ENCODE measurements at regions of chr5 and their contacts with region 1.

Region 1: DNA sequence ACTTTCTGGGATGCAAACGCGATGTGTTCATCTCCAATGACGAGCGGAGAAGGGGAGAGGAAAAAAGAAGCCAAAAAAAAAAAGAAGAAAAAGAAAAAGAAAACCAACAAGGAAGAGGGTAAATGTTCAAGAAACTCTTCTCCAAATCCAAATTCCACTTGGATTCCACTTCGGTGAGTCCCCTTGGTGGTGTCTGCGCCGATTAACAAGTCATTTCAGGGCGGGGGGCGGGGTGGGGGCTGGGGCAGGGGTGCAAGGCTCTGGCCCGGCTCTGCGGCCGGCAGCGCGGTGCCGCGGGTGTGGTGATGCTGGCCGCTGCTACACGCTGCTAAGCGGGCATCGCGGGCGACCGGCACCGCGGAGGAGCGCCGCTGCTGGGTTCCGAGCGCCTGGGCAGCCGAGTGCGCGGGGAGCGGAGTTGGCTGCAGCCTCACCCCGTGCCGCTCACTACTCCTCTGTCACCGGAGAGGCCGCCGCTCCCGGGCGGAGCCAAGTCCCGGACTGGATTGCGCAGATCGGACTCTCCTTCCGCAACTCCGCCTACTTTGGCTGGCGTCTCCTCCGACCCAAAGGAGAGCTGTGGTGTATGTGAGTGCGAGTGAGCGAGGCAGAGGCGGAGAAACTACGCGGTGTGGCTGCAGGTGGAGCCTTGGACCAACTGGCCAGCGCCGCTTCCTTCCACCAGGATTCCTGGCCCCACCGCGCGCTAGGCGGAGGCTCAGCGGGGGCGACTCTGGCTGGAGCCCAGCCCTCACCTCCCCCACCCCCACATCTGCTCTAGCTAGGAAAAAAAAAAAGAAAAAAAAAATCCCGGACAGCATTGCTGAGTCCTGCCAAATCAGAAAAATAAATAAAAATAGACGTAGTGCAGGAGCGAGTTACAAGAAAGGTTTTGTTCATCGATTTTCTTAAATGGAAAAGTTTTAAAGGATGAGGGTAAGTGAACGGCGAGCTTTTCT is at the start of gene SEMA6A:
- DNase-seq: peak; percentile 97
- H3K4me3 ChIP-seq: peak within 1 kb of the TSS; percentile 79 to 83 (median 82)
- H3K27ac ChIP-seq: peak within 1 kb of the TSS; percentile 80 to 85 (median 82)
- H3K4me1 ChIP-seq: peaks cover 6 to 38% (median 20%) of the 10 kb centered on the region in 4 donors
- H3K27me3 ChIP-seq: no peaks in the 10 kb centered on the region
- CTCF ChIP-seq: peak in 1 of 4 experiments; percentile 29
- EP300 ChIP-seq: peak in 1 of 4 donors; percentile 10
- POLR2A ChIP-seq: peak; percentile 33 to 80
- total RNA-seq, gene SEMA6A: 25.0 to 55.7 (median 39.5) TPM

Region 2: DNA sequence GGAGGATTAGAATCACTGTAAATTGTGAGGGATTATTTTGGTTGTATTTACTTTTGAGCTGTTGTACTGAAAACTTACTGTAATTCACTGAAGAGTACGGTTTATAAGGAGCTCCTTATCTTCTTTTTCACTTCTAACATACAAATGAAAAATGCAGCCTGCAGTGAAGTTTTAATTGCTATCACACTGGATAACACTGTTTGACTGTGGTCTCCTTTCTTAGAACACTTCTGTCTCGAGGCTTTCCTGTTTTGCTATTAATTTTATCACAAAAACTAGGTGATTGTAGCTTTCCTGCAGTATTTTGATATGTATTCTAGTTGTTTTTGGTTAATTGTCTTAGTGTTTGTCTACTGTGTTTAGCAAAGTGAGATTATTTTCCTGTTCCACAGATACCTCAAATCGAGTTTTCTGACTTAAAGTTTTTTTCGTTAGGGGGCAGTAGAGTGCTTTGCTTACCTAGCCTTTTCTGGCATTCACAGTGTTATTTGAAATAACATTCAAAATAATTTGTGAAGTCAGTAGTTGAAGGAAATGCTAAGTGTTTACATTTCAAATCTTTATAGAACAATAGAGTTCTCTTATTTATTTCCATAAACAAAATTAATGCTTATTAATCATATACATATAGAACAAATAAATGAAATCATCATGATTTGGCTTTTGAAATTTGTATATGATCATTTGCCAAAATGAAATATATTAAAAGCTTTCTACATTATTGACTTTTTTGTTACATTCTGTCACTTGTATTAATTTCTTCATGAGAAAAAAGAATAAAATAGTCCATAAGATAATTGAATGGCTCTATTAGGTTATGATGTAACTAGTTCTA is 436.9 kb before region 1 on chr5:
- intact Hi-C with region 1: loop called (anchors 5 kb)
- DNase-seq: no peak
- H3K4me3 ChIP-seq: no peak overlapping the region
- H3K27ac ChIP-seq: no peak overlapping the region
- H3K4me1 ChIP-seq: peaks cover 0 to 2% (median 0%) of the 10 kb centered on the region in 4 donors
- H3K27me3 ChIP-seq: no peaks in the 10 kb centered on the region
- CTCF ChIP-seq: peak; percentile 58 to 78 (median 68)
- EP300 ChIP-seq: no peak
- POLR2A ChIP-seq: no peak

Region 3: GRCh38 chr5:116442095-116442534 is 132.5 kb before region 1 on chr5:
- intact Hi-C with region 1: loop called (anchors 5 kb)
- DNase-seq: no peak
- H3K4me3 ChIP-seq: no peak overlapping the region
- H3K27ac ChIP-seq: no peak overlapping the region
- H3K4me1 ChIP-seq: peaks cover 0 to 20% (median 14%) of the 10 kb centered on the region in 4 donors
- H3K27me3 ChIP-seq: no peaks in the 10 kb centered on the region
- CTCF ChIP-seq: no peak
- EP300 ChIP-seq: no peak
- POLR2A ChIP-seq: no peak

Region 4: DNA sequence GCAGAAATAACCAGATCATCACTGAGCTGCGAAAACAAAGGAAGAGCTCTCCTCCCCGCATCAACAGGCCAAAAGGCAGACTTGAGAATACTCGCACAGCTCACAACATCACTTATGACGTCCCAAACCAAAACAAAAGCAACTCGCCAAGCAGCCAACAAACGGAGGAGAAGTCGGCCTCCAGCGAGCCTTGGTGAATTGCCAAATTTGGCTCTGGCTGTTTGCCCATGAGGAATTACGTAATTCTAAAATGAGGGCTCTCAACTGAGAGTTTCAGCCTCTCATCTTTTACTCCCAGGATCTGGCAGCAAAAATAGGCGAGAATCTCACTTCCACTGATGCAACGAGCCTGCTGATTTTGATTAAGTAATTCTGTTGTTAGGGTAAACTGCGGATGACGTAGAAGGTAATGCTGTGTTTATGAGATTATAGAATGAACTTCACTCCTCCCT is 51.7 kb after region 1 on chr5:
- intact Hi-C with region 1: loop called (anchors 2 kb)
- DNase-seq: peak; percentile 92
- H3K4me3 ChIP-seq: peak overlapping the region in 3 of 4 donors; percentile 14 to 28 (median 28)
- H3K27ac ChIP-seq: peak overlapping the region; percentile 53 to 73 (median 70)
- H3K4me1 ChIP-seq: peaks cover 0 to 18% (median 11%) of the 10 kb centered on the region in 4 donors
- H3K27me3 ChIP-seq: no peaks in the 10 kb centered on the region
- CTCF ChIP-seq: no peak
- EP300 ChIP-seq: peak in 1 of 4 donors; percentile 14
- POLR2A ChIP-seq: no peak

Region 5: DNA sequence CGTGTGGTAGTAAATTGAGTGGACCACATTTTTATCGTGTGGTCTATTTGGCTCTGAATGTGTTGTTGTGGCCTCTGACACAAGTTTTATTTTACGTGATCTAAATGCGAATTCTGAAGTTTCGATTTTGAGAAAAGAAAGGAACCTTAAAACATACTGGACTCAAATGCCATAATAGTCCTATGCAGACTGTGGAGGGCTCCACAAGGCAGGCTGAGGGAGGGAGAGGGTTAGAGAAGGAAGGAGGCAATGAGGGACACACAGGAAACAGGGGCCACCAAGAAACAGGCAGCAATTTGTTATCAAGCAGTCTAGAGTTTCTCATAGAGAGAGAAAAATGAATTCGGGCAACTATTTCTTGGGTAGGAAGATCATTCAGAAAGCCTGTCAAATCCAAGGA is 110.4 kb after region 1 on chr5:
- intact Hi-C with region 1: no loop called
- DNase-seq: no peak
- H3K4me3 ChIP-seq: no peak overlapping the region
- H3K27ac ChIP-seq: no peak overlapping the region
- H3K4me1 ChIP-seq: peaks cover 0 to 13% (median 0%) of the 10 kb centered on the region in 4 donors
- H3K27me3 ChIP-seq: no peaks in the 10 kb centered on the region
- CTCF ChIP-seq: no peak
- EP300 ChIP-seq: no peak
- POLR2A ChIP-seq: no peak

Region 6: GRCh38 chr5:116947691-116948528 is 373.3 kb after region 1 on chr5:
- intact Hi-C with region 1: loop called (anchors 10 kb)
- DNase-seq: no peak
- H3K4me3 ChIP-seq: no peak overlapping the region
- H3K27ac ChIP-seq: no peak overlapping the region
- H3K4me1 ChIP-seq: no peaks in the 10 kb centered on the region
- H3K27me3 ChIP-seq: no peaks in the 10 kb centered on the region
- CTCF ChIP-seq: peak in 3 of 4 experiments; percentile 40 to 49 (median 49)
- EP300 ChIP-seq: no peak
- POLR2A ChIP-seq: no peak

Region 7: DNA sequence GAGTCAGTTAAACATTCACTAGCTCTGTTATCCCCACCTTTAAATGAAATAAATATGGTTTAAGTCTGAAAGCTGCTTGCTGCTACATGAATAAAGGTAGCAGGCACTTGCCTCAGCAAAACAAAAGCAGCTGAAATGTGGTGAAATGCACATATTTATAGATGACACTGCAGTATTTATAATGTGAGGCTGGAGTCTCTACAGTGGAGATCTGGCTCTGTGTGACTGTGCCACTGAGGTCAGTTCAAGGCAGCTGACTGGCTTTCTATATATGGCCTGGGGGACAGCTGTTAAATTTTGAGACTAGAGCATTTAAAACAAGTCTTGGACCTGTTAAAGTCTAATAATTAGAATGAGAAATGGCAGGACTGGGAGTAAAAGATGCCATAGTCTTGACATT is 859.6 kb after region 1 on chr5:
- intact Hi-C with region 1: loop called (anchors 10 kb)
- DNase-seq: no peak
- H3K4me3 ChIP-seq: no peak overlapping the region
- H3K27ac ChIP-seq: peak overlapping the region in 3 of 4 donors; percentile 66 to 74 (median 71)
- H3K4me1 ChIP-seq: peaks cover 0 to 67% (median 40%) of the 10 kb centered on the region in 4 donors
- H3K27me3 ChIP-seq: no peaks in the 10 kb centered on the region
- CTCF ChIP-seq: no peak
- EP300 ChIP-seq: no peak
- POLR2A ChIP-seq: no peak